MCF 10A (cell line): ENCODE measurements at regions of chr14 and their contacts with region 1.

Region 1: GRCh38 chr14:30656190-30656632 is 34.1 kb downstream of the SCFD1 start:
- DNase-seq: peak; percentile 71
- H3K4me3 Mint-ChIP-seq: no peak overlapping the region
- H3K27ac Mint-ChIP-seq: no peak overlapping the region
- H3K4me1 Mint-ChIP-seq: no peaks in the 10 kb centered on the region
- H3K27me3 Mint-ChIP-seq: no peaks in the 10 kb centered on the region
- CTCF ChIP-seq: peak; percentile 70

Region 2: DNA sequence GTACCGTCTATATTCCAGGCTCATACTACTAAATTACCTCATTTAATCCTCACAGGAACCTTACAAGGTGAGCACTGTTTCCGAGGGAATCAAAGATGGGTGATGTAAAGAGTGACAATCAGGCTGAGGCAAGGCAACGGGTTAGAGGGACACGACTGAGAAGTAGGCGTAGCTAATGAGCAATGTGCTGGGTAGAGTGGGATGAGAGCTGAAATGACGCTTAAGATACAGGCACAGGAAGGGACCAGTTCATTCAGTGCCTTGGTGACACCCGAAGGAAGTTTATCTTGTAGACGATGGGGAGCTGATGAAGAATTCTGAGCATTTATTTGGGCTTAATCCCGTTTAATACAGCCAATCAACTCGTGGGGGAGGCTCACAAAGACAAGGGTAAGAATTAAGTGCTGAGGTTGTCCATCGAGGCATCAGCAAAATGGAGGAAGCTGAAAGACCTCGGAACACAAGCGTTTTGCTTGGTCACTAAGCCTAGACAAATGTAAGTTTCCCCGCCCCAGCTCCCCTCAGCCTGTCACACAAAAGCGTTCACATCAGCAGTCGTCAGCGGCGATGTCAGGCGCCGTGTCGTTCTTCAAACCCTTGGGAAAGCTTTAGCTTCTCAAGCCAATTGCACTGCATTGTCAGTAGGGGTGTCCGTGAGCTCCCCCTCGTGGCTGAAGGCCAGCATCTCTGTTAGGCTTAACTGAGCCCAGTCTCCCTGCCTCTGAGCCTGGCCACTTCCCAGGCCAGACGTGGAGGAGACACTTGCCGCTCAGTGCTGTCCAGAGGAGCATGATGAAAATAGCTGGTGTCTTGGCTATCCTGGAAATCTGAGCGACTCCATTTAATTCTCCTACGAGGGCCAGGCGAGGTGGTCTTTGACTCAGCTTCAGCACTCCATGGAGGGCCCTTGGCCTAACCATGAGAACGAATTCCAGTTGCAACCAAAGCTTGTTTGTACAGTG is 385.7 kb before region 1 on chr14:
- CTCF ChIA-PET with region 1: no interaction called
- POLR2A ChIA-PET with region 1: no interaction called
- intact Hi-C with region 1: no loop called
- DNase-seq: peak; percentile 90
- H3K4me3 Mint-ChIP-seq: peak overlapping the region; percentile 2
- H3K27ac Mint-ChIP-seq: peak overlapping the region; percentile 40
- H3K4me1 Mint-ChIP-seq: peaks cover 20% of the 10 kb centered on the region
- H3K27me3 Mint-ChIP-seq: no peaks in the 10 kb centered on the region
- CTCF ChIP-seq: peak; percentile 80

Region 3: DNA sequence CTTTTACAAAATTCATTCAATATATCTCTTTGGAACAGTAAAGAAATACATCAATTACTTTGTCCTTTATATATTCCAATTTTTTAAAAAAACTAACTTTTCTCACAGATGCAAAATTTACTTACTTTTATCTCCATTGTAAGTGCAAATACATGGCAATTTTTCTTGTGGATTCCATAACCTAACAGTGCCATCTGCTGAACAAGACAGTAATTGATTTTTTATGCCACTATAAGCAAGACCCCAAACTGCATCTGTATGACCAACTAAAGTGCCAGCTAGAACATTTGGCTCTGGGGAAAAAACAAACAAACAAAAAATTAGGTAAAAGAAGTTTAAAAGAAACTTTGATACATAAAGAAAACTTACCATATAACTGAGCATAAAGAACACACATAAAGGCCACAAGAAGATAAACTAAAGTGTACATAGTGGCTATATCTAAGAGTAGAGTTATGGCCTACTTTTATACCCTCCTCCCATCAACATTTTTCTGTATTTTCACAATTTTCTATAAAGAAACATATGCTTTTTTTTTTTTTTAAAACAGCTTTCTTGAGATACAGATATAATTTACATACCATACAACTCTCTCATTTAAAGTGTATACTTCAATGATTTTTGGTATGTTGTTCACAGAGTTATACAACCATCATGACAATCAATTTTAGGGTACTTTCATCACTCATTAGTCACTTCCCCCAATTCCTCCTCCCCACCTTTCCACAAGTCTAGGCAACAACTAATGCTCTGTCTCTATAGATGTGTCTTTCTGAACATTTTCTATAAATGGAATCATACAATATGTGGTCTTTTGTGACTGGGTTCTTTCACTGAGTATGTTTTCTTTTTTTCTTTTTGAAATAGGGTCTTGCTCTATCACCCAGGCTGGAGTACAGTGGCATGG is 250.8 kb after region 1 on chr14:
- CTCF ChIA-PET with region 1: interaction called, 6 read pairs
- POLR2A ChIA-PET with region 1: no interaction called
- intact Hi-C with region 1: loop called (anchors 1 kb)
- DNase-seq: peak; percentile 27
- H3K4me3 Mint-ChIP-seq: no peak overlapping the region
- H3K27ac Mint-ChIP-seq: no peak overlapping the region
- H3K4me1 Mint-ChIP-seq: no peaks in the 10 kb centered on the region
- H3K27me3 Mint-ChIP-seq: no peaks in the 10 kb centered on the region
- CTCF ChIP-seq: peak; percentile 38

Region 4: DNA sequence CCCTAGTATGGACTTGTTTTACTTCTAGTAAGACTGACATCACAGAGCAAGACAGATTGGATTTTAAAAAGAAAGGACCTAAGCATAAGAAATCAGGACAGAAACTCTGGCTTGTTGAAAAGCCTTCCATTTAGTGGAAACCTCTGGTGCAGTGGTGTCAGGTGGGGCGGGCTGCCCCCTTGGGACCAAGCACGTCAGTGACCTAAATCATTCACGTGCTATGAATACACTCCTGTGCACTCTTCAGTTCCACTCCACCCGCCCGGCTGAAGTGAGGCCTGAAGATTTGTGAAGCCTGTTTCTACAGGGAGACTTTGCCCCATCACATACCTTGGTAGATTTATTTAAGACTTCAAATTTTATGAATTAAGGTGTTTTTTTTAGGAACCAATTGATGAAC is 428.2 kb after region 1 on chr14:
- CTCF ChIA-PET with region 1: interaction called, 6 read pairs
- POLR2A ChIA-PET with region 1: no interaction called
- intact Hi-C with region 1: loop called (anchors 2 kb)
- DNase-seq: no peak
- H3K4me3 Mint-ChIP-seq: no peak overlapping the region
- H3K27ac Mint-ChIP-seq: no peak overlapping the region
- H3K4me1 Mint-ChIP-seq: no peaks in the 10 kb centered on the region
- H3K27me3 Mint-ChIP-seq: no peaks in the 10 kb centered on the region
- CTCF ChIP-seq: no peak

Region 5: DNA sequence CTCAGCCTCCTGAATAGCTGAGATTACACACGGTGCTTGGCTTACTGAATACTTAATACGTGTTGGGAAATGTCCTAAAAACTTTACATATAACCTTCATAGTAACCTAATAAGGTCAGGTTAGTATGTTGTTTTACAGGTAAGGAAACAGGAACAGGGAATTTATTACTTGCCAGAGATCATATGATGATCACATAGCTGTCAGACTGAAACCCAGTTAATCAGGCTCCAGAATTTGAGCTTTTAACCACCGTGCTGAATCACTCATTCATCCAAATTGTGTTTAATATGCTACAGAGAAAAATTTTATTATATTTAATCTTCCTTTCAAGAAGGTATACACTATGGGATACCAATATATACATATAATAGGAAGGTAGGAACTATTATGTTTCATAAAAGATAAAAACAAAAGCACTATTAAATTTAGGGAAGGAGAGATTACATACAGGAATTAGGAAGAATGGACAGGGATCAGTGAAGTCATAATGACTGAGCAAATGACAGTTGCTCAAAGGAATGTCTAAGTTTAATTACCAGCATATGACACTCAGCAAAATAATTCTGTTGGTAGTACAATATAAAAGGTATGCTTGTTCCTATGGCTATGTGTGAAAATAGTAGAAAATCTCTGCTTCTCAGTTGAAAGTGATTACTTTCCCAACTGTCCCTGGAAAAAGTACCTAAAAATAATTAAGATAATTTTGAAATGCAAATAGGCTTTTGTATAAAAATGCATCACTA is 704.9 kb after region 1 on chr14:
- CTCF ChIA-PET with region 1: no interaction called
- POLR2A ChIA-PET with region 1: no interaction called
- intact Hi-C with region 1: loop called (anchors 10 kb)
- DNase-seq: no peak
- H3K4me3 Mint-ChIP-seq: no peak overlapping the region
- H3K27ac Mint-ChIP-seq: no peak overlapping the region
- H3K4me1 Mint-ChIP-seq: peaks cover 6% of the 10 kb centered on the region
- H3K27me3 Mint-ChIP-seq: no peaks in the 10 kb centered on the region
- CTCF ChIP-seq: no peak

Region 6: DNA sequence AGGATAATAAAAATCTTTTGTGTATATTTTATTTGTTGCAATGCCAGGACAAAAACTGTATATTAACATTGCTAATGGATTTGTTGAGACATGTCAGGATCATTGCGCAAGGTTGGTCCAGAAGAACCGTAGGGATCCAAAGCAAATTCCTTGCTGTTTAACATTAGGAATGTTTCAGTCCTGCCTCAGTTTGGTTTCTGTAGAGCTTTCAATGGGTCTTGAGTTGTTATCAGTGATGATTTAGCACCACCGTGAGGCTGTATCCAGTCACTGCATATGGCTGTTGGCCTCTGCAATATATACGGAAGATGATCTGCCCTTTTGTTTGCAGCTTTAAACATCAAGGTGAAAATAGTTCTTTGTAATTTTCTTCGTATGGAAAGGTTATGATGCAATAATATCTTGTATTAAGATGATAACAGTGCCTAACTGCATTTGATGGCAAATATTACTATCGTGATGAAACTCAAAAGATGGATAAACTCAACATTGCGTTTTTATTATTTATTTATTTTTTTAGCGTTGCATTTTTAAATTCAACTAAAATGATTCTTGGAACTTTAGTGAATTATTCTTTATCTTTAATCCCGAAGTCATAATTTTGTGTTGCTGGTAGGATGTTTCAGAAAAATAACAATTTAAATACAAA is 1904.1 kb after region 1 on chr14:
- CTCF ChIA-PET with region 1: no interaction called
- POLR2A ChIA-PET with region 1: no interaction called
- intact Hi-C with region 1: loop called (anchors 5 kb)
- DNase-seq: peak; percentile 85
- H3K4me3 Mint-ChIP-seq: no peak overlapping the region
- H3K27ac Mint-ChIP-seq: no peak overlapping the region
- H3K4me1 Mint-ChIP-seq: peaks cover 10% of the 10 kb centered on the region
- H3K27me3 Mint-ChIP-seq: no peaks in the 10 kb centered on the region
- CTCF ChIP-seq: peak; percentile 77